GM10248 (cell line): ENCODE measurements at regions of chr3 and their contacts with region 1.

Region 1: DNA sequence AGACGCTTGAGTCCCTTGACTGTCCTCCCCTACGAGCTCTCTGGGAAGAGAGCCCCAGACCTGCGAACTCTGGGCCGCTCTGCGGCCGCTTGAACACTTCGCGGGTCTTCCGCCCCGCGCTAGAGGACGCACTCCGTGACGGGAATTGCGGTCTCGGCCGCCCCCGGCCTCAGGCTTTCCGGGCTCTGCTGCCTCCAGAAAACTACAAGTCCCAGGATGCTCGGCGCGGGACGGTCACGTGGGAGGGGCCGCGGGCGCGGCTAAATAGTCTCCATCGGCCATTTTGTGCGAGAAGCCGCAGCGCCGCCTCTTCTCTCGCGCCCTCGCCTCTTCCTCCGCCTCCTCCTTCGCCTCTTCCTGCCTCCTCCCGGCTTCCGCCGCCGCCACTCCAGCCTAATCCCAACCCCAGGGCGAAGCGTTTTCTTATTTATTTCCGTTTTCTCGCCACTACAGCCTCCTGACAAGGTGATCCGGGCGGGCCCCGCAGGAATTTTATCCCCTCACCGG is at the start of gene EIF1B:
- DNase-seq: peak; percentile 97
- CTCF ChIP-seq: peak; percentile 91

Region 2: GRCh38 chr3:40291471-40291870 is 18.0 kb before region 1 on chr3:
- CTCF ChIA-PET with region 1: interaction called, 26 read pairs
- POLR2A ChIA-PET with region 1: no interaction called
- DNase-seq: no peak
- CTCF ChIP-seq: no peak